Activated CD8-positive, alpha-beta memory T cell treated with anti-CD3 and anti-CD28 coated beads, Interleukin-2, amount 10 ng/mL, durations not matched to agents 7 days and 5 days (primary cell): ENCODE measurements at regions of chr1 and their contacts with region 1.

Region 1: DNA sequence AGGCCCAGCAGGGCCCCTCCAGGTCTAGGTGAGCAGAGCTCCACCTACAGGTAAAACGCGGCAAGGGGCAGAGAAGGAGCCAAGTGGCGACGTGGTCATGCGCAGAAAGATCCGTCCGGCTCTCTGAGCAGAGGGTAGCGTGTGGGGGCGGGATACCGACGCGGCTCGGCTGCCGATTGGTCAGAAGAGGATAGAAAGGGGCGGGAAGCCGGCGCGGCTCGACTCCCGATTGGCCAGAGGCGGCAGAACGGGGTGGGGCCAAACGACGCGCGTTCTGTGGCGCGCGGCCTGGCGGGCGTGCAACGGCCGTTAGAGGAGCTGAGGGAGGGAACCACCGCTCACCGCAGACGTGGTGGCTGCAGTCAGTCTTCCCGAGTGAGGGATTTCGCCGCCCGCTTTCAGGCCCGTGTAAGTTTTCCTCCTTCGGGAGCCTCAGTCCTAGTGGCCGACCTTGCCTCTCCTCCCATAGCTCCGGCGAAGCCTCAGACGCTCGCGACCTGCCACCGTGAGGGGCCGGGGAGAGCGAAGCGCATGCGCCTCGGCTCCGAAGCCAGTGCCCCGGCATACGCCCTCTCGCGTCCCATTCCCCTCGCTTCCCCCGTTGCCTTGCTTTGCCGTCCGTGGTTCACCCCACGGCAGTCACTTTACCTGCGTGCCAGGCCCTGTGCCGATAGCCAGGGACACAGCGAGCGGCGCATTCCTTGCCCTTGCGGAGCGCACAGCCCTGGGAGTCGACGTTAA is at the start of gene CEP85:
- DNase-seq: peak; percentile 99
- ATAC-seq: peak; percentile 95
- H3K4me3 Mint-ChIP-seq: peak within 1 kb of the TSS; percentile 96
- H3K27ac Mint-ChIP-seq: peak within 1 kb of the TSS; percentile 88
- H3K4me1 Mint-ChIP-seq: peaks cover 36% of the 10 kb centered on the region
- H3K27me3 Mint-ChIP-seq: no peaks in the 10 kb centered on the region
- total RNA-seq, gene CEP85: 42.0 to 56.3 TPM

Region 2: GRCh38 chr1:26083246-26083645 is 150.8 kb before region 1 on chr1:
- CTCF ChIA-PET with region 1: no interaction called
- DNase-seq: no peak
- ATAC-seq: no peak
- H3K4me3 Mint-ChIP-seq: no peak overlapping the region
- H3K27ac Mint-ChIP-seq: no peak overlapping the region
- H3K4me1 Mint-ChIP-seq: no peaks in the 10 kb centered on the region
- H3K27me3 Mint-ChIP-seq: peaks cover 38% of the 10 kb centered on the region

Region 3: GRCh38 chr1:26145041-26145959 is 88.8 kb before region 1 on chr1:
- CTCF ChIA-PET with region 1: interaction called, 14 read pairs
- DNase-seq: peak; percentile 78
- ATAC-seq: peak; percentile 90
- H3K4me3 Mint-ChIP-seq: no peak overlapping the region
- H3K27ac Mint-ChIP-seq: no peak overlapping the region
- H3K4me1 Mint-ChIP-seq: peaks cover 2% of the 10 kb centered on the region
- H3K27me3 Mint-ChIP-seq: peaks cover 29% of the 10 kb centered on the region

Region 4: GRCh38 chr1:26203642-26204318 is 30.3 kb before region 1 on chr1:
- CTCF ChIA-PET with region 1: interaction called, 18 read pairs
- DNase-seq: no peak
- ATAC-seq: no peak
- H3K4me3 Mint-ChIP-seq: no peak overlapping the region
- H3K27ac Mint-ChIP-seq: no peak overlapping the region
- H3K4me1 Mint-ChIP-seq: peaks cover 33% of the 10 kb centered on the region
- H3K27me3 Mint-ChIP-seq: no peaks in the 10 kb centered on the region

Region 5: GRCh38 chr1:26279456-26280332 is 45.6 kb after region 1 on chr1 and contains the start of gene SH3BGRL3:
- CTCF ChIA-PET with region 1: interaction called, 35 read pairs
- DNase-seq: peak; percentile 90
- ATAC-seq: peak; percentile 66
- H3K4me3 Mint-ChIP-seq: peak within 1 kb of the TSS; percentile 89
- H3K27ac Mint-ChIP-seq: peak within 1 kb of the TSS; percentile 99
- H3K4me1 Mint-ChIP-seq: peaks cover 84% of the 10 kb centered on the region
- H3K27me3 Mint-ChIP-seq: no peaks in the 10 kb centered on the region
- total RNA-seq, gene SH3BGRL3: 562 to 632 TPM

Region 6: GRCh38 chr1:26349188-26349876 is 115.3 kb after region 1 on chr1:
- CTCF ChIA-PET with region 1: no interaction called
- DNase-seq: no peak
- ATAC-seq: no peak
- H3K4me3 Mint-ChIP-seq: no peak overlapping the region
- H3K27ac Mint-ChIP-seq: no peak overlapping the region
- H3K4me1 Mint-ChIP-seq: peaks cover 2% of the 10 kb centered on the region
- H3K27me3 Mint-ChIP-seq: no peaks in the 10 kb centered on the region

Region 7: GRCh38 chr1:26378088-26378878 is 144.2 kb after region 1 on chr1:
- CTCF ChIA-PET with region 1: interaction called, 18 read pairs
- DNase-seq: peak; percentile 96
- ATAC-seq: peak; percentile 96
- H3K4me3 Mint-ChIP-seq: peak overlapping the region; percentile 29
- H3K27ac Mint-ChIP-seq: peak overlapping the region; percentile 87
- H3K4me1 Mint-ChIP-seq: peaks cover 75% of the 10 kb centered on the region
- H3K27me3 Mint-ChIP-seq: peaks cover 2% of the 10 kb centered on the region

Region 8: DNA sequence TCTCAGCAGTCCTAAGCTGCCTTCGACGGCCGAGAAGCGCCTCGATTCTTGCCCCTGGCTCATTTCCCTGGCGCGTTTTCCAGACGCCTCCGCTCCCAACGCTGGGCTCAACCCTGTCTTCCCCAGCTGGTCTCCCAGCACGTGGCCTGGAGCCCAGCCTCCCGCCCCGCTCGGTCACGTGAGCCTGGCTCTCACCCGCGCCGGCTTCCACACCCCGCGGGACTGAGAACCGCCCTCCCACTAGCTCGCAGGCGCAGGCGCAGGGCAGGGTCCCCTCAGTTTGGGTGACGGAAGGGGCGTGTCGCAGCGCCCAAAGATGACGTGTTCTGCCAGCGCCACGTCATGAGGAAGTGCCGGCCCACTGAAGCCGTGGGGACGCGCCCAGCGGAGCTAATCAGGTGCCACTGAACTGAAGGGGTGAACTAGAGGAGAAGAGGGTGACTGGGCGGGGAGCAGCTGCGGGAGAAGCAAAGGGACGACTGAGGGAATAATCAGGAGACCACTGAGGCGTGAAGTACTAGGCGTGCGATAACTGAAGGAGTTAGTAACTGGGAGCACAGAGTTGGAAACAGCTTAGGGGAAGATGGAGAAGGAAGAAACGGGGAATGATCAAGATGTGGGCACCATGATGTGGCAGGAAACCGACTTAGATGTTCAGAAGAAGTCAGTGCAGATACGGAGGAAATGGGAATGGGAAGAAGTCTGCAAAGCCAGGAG is 198.1 kb after region 1 on chr1 and contains the start of gene DHDDS:
- CTCF ChIA-PET with region 1: interaction called, 17 read pairs
- DNase-seq: peak; percentile 99
- ATAC-seq: peak; percentile 98
- H3K4me3 Mint-ChIP-seq: peak within 1 kb of the TSS; percentile 97
- H3K27ac Mint-ChIP-seq: peak within 1 kb of the TSS; percentile 91
- H3K4me1 Mint-ChIP-seq: peaks cover 32% of the 10 kb centered on the region
- H3K27me3 Mint-ChIP-seq: peaks cover 13% of the 10 kb centered on the region
- total RNA-seq, gene DHDDS: 49.2 to 54.0 TPM